Pancreas (tissue), 10 donors: ENCODE measurements at regions of chr20 and their contacts with region 1.

Region 1: DNA sequence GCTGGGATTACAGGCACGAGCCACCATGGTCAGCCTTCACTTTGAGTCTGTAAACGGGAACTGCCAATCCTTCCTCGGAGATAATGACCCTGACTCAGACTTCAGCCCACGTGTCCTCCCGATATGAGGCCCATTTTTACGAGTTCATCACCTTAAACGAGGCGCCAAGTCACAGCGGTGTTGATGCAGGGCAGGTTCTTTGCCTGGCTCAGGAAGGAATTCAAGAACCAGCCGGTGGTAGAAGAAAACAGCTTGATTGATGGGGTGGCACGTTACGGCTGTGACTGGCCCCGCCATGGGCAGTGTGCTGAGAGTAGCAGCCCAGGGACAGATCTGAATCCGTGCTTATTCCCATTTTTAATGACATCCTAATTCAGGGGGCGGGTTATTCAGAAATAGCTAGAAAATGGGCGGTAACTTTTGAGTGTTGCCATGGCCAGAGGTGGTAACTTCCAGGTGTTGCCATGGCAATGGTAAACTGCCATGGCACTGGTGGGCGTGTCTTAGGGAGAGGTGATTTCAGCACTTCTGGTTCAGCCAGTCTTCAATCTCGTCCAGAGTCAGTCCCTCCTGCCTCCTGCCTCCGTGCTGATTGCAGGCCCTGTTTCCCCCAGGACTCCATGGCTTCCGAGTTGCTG is 9.1 kb upstream of the MAP1LC3A start:
- DNase-seq: peak in 4 of 6 donors; percentile 35 to 62 (median 56)
- ATAC-seq: peak; percentile 31 to 48 (median 40)
- H3K4me3 ChIP-seq: no peak overlapping the region
- H3K27ac ChIP-seq: no peak overlapping the region
- H3K4me1 ChIP-seq: peaks cover 4 to 13% (median 9%) of the 10 kb centered on the region in 3 donors
- H3K27me3 ChIP-seq: no peaks in the 10 kb centered on the region
- CTCF ChIP-seq: no peak

Region 2: DNA sequence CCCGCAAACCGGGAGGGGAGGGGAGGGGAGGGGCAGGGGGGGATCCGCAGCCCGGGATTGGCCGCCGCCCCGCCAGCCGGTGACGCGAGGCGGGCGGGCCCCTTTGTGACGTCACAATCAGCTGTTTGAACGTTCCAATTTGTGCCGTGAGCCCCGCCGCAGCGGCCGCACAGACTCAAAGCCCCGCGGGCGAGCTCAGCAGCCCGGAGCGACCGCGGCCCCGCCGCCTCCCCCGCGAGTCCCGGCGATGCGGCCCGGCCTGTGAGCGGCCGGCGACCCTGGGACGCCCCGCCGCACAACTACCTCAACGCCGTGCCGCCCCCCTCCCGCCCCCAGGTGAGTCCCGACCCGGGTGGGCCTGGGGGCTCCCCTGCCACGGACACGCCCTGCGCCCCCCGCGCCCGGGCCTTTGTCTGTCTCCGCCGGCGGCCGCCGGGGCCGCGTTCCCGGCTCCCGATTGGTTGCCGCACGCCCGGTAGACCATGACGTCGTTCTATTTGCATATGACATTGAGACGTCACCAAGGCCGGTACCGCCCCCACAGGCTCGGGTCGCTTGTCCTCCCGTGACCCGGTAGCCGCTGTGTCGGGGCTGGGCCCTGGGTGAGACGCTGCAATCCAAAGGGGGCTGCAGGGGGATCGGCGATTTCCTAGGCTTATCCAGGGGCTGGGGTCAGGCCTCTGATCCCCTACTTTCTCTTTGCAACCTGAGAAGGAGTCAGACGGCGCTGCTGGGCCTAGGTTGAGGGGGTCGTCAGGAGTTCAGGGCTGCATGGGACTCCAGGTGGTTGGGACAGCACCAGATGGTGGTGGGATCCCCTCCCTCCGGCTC is 155.0 kb after region 1 on chr20 and contains the start of gene TP53INP2:
- intact Hi-C with region 1: loop called in 1 of 3 experiments (anchors 10 kb)
- DNase-seq: peak; percentile 92 to 96 (median 94)
- ATAC-seq: peak; percentile 82 to 86 (median 84)
- H3K4me3 ChIP-seq: peak within 1 kb of the TSS; percentile 71 to 96 (median 90)
- H3K27ac ChIP-seq: peak within 1 kb of the TSS; percentile 98 to 100 (median 98)
- H3K4me1 ChIP-seq: peaks cover 0 to 11% (median 0%) of the 10 kb centered on the region in 3 donors
- H3K27me3 ChIP-seq: no peaks in the 10 kb centered on the region
- CTCF ChIP-seq: no peak
- total RNA-seq, gene TP53INP2: 3.8 to 7.1 (median 4.6) TPM